Panc1 (cell line): ENCODE measurements at regions of chr2 and their contacts with region 1.

Region 1: DNA sequence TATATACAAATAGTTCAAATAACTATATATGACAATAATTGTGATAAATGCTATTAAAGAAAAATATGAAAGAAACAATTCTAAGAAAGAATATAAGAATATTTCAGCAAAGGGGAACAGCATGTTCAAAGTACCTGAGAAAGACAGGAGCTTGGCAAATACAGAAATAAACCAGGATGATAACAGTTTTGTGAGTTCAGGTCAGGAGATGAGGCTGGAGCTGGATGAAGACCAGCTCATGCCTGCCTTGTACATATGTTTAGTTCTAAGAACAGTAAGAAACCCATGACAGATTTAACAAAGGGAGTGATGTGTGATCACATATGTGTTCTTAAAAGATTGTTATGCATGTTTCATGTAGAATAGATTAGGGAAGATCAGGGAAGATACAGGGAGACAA is 98.2 kb downstream of the R3HDM1 start:
- DNase-seq: no peak
- ATAC-seq: no peak
- H3K4me3 ChIP-seq: no peak overlapping the region
- H3K27ac ChIP-seq: no peak overlapping the region
- H3K4me1 ChIP-seq: no peaks in the 10 kb centered on the region
- H3K27me3 ChIP-seq: no peaks in the 10 kb centered on the region
- CTCF ChIP-seq: no peak

Region 2: DNA sequence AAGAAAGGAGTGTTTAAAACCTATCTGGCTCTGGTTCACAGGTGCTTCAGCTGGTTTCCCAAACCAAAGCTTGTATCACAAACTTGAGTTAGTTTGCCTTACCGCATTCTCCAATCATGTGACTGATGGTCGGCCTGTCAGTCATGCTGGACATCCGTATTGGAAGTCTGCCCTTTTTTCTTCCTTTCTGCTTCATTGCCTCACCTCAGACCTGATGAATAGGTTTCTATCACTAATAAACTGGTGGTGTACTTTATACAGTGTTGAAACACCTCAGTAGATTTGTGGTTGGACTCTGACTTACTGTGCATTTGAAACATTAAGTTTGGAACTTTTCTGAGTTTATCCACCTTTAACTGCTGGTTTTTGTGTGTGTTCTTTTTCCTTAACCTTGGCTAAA is 14.1 kb before region 1 on chr2:
- CTCF ChIA-PET with region 1: no interaction called
- POLR2A ChIA-PET with region 1: no interaction called
- in situ Hi-C with region 1: no loop called
- intact Hi-C with region 1: loop called (anchors 1 kb)
- DNase-seq: no peak
- ATAC-seq: no peak
- H3K4me3 ChIP-seq: no peak overlapping the region
- H3K27ac ChIP-seq: no peak overlapping the region
- H3K4me1 ChIP-seq: no peaks in the 10 kb centered on the region
- H3K27me3 ChIP-seq: no peaks in the 10 kb centered on the region
- CTCF ChIP-seq: no peak

Region 3: DNA sequence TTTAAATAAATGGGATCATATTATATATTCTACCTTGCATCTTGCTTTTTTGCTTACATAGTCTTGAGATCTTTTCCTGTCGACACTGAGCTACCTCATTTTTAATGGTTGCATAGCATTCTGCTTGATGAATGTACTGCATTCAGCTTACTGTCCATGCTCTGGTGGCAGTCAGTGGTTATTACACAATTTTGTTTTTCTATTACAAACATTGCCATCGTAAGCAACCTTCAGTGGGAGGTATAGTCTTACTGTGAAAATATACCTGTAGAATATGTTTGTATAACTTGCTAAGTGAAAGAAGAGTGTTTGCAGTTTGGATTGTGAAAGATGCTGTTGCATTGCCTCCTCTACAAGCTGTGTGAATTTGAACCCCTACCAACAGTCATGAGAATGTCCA is 155.5 kb after region 1 on chr2:
- CTCF ChIA-PET with region 1: no interaction called
- POLR2A ChIA-PET with region 1: no interaction called
- in situ Hi-C with region 1: no loop called
- intact Hi-C with region 1: no loop called
- DNase-seq: no peak
- ATAC-seq: 0 out of 2 replicates have a peak, but pooled peaks have one; percentile 51
- H3K4me3 ChIP-seq: no peak overlapping the region
- H3K27ac ChIP-seq: no peak overlapping the region
- H3K4me1 ChIP-seq: no peaks in the 10 kb centered on the region
- H3K27me3 ChIP-seq: no peaks in the 10 kb centered on the region
- CTCF ChIP-seq: no peak